ENCODE measurements at regions of chr7 and their contacts with region 1.

Region 1: GRCh38 chr7:118104812-118105441 is 79.0 kb upstream of the LSM8 start:
- DNase-seq: no peak
- ATAC-seq: no peak
- H3K4me3 ChIP-seq: no peak overlapping the region
- H3K27ac ChIP-seq: no peak overlapping the region
- H3K4me1 ChIP-seq: no peaks in the 10 kb centered on the region
- H3K27me3 ChIP-seq: no peaks in the 10 kb centered on the region
- CTCF ChIP-seq: peak in 7 of 9 donors; percentile 46 to 62 (median 53)

Region 2: GRCh38 chr7:117741962-117742361 is 363.0 kb before region 1 on chr7:
- intact Hi-C with region 1: loop called in 3 of 10 experiments (anchors 5 to 10 kb)
- DNase-seq: no peak
- ATAC-seq: no peak
- H3K4me3 ChIP-seq: no peak overlapping the region
- H3K27ac ChIP-seq: no peak overlapping the region
- H3K4me1 ChIP-seq: no peaks in the 10 kb centered on the region
- H3K27me3 ChIP-seq: no peaks in the 10 kb centered on the region
- CTCF ChIP-seq: no peak

Measured in heart right ventricle (tissue), 16 donors.